ENCODE measurements at regions of chr9 and their contacts with region 1.

Region 1: DNA sequence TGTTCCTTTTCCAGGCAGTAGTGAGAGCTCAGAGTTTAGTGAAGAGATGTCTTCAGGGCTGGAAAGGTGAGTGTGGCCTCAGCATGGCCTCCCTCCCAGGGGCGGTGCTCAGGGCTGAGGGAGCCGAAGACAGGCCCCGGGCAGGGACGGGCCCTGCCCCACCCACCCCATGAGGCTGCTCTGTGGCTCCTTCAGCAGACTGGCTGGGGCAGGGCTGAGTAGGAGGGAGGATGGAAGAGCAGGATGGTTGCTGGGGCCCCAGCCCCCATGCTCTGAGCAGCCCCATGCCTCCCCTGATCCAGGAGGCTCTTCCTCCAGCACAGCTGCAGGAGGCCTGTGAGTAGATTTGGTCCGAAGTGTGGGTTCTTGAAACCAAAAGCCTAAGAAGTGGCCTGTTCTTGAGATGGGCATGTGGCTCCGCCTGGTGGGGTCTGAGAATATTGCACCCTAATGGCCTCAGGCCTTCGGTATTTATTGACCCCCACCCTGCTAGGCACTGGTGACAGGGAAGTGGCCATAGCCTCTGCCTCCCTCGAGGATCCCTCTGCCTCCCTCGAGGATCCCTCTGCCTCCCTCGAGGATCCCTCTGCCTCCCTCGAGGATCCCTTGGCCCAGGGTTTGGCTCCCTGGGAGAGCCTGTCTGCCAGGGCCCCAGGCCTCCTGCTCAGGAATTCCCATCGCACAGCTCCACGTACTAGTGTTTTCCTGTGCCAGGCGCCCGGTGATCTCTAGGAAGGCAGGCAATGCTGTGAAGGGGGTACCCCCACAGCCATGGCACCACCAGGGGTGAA is 65.4 kb upstream of the GARNL3 start:
- DNase-seq: peak; percentile 73 to 81
- ATAC-seq: peak; percentile 40 to 77; a peak in 5 of 6 replicates
- H3K4me3 ChIP-seq: no peak overlapping the region
- H3K27ac ChIP-seq: peak overlapping the region in 1 of 2 experiments; percentile 64; a peak in 2 of 6 replicates
- H3K4me1 ChIP-seq: peaks cover 17% of the 10 kb centered on the region
- CTCF ChIP-seq: peak; percentile 92
- EP300 ChIP-seq: no peak
- POLR2A ChIP-seq: no peak
- RAD21 ChIP-seq: peak; percentile 97

Region 2: DNA sequence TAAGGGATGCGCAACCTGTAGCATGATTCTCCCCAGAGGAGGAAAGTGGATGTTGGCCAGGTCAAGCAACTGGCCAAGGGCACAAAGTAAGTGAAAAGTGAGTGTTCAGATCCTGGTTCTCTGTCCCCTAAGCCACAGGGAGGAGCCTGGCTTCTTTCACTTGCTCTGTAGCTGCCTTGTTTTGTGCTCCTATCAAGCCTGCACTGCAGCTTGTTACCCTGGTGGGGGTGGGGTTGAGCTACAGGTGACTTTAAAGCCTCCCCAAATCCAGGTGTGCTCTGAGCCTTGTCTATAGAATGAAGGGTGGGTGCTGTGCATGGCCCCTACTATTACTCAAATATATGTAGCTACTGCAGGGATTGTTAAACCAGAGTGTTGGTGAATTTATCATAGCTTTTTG is 251.7 kb before region 1 on chr9:
- CTCF ChIA-PET with region 1: interaction called, 381 read pairs
- POLR2A ChIA-PET with region 1: no interaction called
- DNase-seq: no peak
- ATAC-seq: peak in 1 of 2 experiments; percentile 42; a peak in 1 of 6 replicates
- H3K4me3 ChIP-seq: no peak overlapping the region
- H3K27ac ChIP-seq: no peak overlapping the region
- H3K4me1 ChIP-seq: no peaks in the 10 kb centered on the region
- CTCF ChIP-seq: no peak
- EP300 ChIP-seq: no peak
- POLR2A ChIP-seq: no peak
- RAD21 ChIP-seq: peak in 1 of 2 experiments; percentile 5; a peak in 1 of 5 replicates

Region 3: DNA sequence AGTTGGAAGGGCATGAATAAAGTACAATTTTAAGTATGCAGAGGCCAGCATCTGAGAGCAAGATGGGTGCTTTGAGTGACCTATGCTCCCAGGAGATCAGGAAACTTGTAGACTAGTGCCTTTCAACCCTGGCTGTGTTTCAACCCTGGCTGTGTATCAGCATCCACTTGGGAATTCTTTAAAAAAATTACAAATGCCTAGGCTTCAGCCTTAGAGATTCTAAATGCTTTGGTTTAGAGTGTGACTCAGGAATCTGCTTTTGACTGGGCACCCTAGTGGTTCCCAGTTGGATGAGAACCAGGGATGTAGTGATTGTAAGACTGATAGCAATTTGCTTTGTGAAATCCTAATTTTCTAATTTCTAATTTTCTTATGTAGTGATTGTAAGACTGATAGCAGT is 219.0 kb before region 1 on chr9:
- CTCF ChIA-PET with region 1: interaction called, 12 read pairs
- POLR2A ChIA-PET with region 1: no interaction called
- DNase-seq: no peak
- ATAC-seq: no peak
- H3K4me3 ChIP-seq: no peak overlapping the region
- H3K27ac ChIP-seq: no peak overlapping the region
- H3K4me1 ChIP-seq: peaks cover 9% of the 10 kb centered on the region
- CTCF ChIP-seq: no peak
- EP300 ChIP-seq: no peak
- POLR2A ChIP-seq: no peak
- RAD21 ChIP-seq: no peak

Region 4: GRCh38 chr9:127159325-127159801 is 39.8 kb before region 1 on chr9:
- CTCF ChIA-PET with region 1: interaction called, 23 read pairs
- POLR2A ChIA-PET with region 1: no interaction called
- DNase-seq: peak; percentile 19 to 74
- ATAC-seq: peak; percentile 87
- H3K4me3 ChIP-seq: no peak overlapping the region
- H3K27ac ChIP-seq: peak overlapping the region; percentile 36 to 60
- H3K4me1 ChIP-seq: peaks cover 25% of the 10 kb centered on the region
- CTCF ChIP-seq: no peak
- EP300 ChIP-seq: no peak
- POLR2A ChIP-seq: no peak
- RAD21 ChIP-seq: no peak

Region 5: DNA sequence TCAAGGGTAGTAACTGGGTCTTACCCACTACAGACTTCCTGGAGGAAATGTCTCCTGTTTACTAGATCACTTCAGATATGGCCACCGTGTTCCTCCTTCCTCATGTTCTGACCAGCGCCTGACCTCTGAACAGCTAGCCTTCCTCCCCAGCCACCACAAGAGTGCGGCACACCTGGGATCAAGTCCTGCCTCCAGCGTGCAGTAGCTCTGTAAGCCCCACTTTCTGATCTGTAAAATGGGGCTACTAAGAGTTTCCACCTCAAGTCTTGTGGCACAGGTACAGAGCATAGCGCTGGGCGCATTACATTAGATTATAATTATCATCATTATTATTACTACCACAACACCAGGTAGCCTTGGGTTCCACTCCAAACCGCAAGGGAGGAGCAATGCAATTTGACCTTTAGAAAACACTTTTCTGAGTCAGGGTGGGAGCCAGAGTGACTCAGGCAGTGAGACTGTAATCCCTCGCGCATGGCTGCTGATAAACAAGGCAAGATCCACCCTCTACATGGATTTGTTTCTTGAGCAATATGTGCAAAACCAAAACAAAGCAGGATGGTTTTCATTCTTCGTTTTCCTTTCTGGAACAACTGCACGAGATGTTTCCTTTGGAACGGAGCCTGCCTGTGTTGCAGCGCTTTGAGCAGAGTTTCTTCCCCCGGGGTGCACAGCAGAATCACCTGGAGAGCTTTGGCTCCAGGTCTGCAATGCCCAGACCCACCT is 11.8 kb before region 1 on chr9:
- CTCF ChIA-PET with region 1: interaction called, 55 read pairs
- POLR2A ChIA-PET with region 1: no interaction called
- DNase-seq: peak; percentile 55 to 60
- ATAC-seq: peak; percentile 87
- H3K4me3 ChIP-seq: no peak overlapping the region
- H3K27ac ChIP-seq: peak overlapping the region; percentile 3 to 75; a peak in 4 of 6 replicates
- H3K4me1 ChIP-seq: peaks cover 23% of the 10 kb centered on the region
- CTCF ChIP-seq: no peak
- EP300 ChIP-seq: no peak
- POLR2A ChIP-seq: no peak
- RAD21 ChIP-seq: no peak

Measured in A549 (cell line).